ENCODE measurements at regions of chr19 and their contacts with region 1.

Region 1: GRCh38 chr19:52734893-52735661 is at the start of gene ZNF611:
- DNase-seq: peak; percentile 99
- H3K4me3 Mint-ChIP-seq: peak within 1 kb of the TSS; percentile 76
- H3K27ac Mint-ChIP-seq: peak within 1 kb of the TSS; percentile 89
- H3K4me1 Mint-ChIP-seq: peaks cover 26% of the 10 kb centered on the region
- H3K27me3 Mint-ChIP-seq: no peaks in the 10 kb centered on the region
- total RNA-seq, gene ZNF611: 17.9 to 20.3 TPM

Region 2: GRCh38 chr19:52535771-52536447 is 199.2 kb before region 1 on chr19:
- CTCF ChIA-PET with region 1: no interaction called
- POLR2A ChIA-PET with region 1: no interaction called
- intact Hi-C with region 1: loop called (anchors 2 kb)
- DNase-seq: peak; percentile 96
- H3K4me3 Mint-ChIP-seq: peak overlapping the region; percentile 80
- H3K27ac Mint-ChIP-seq: peak overlapping the region; percentile 91
- H3K4me1 Mint-ChIP-seq: peaks cover 22% of the 10 kb centered on the region
- H3K27me3 Mint-ChIP-seq: no peaks in the 10 kb centered on the region

Region 3: DNA sequence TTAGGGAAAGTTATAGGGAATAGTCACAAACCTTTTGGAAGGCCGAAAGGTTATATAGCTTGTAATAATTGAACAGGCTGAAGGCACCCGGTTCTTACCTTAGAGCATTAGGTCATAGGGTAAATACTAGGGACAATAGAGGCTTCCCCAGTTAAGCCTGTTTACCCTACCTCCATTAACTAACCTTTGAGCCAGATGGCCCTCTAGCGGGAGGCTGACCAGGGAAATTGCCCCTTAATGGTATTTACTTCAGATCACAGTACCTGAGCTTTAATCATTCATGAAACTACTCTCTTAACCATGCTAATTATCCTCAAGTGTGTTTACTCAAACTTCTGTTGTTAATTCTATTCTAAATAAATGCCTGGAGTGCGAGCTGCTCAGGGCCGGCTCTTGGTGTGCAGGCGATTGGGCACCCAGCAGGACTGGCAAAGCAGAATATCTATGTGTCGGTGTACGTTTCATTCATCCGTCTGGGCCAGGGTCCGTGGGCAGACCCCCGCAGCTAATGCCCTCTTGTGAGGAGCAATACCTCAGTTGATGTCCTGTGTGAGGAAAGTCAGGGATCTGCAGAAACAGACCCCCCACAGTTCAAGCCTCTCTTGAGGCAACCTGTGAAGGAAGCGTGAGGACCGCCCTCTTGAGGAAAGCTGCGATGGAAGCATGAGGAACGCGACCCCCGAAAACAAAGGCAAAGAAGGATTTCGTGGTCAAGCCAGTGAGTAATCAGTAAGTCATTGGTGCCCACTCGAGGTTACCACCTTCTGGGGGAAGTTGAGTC is 76.3 kb before region 1 on chr19:
- CTCF ChIA-PET with region 1: no interaction called
- POLR2A ChIA-PET with region 1: no interaction called
- intact Hi-C with region 1: no loop called
- DNase-seq: no peak
- H3K4me3 Mint-ChIP-seq: no peak overlapping the region
- H3K27ac Mint-ChIP-seq: no peak overlapping the region
- H3K4me1 Mint-ChIP-seq: peaks cover 10% of the 10 kb centered on the region
- H3K27me3 Mint-ChIP-seq: no peaks in the 10 kb centered on the region

Region 4: GRCh38 chr19:52690369-52691214 is 44.5 kb before region 1 on chr19:
- CTCF ChIA-PET with region 1: no interaction called
- POLR2A ChIA-PET with region 1: no interaction called
- intact Hi-C with region 1: loop called (anchors 1 kb)
- DNase-seq: peak; percentile 95
- H3K4me3 Mint-ChIP-seq: peak overlapping the region; percentile 96
- H3K27ac Mint-ChIP-seq: peak overlapping the region; percentile 88
- H3K4me1 Mint-ChIP-seq: peaks cover 24% of the 10 kb centered on the region
- H3K27me3 Mint-ChIP-seq: no peaks in the 10 kb centered on the region

Region 5: GRCh38 chr19:52786457-52787359 is 51.6 kb after region 1 on chr19 and contains the start of gene ZNF600:
- CTCF ChIA-PET with region 1: no interaction called
- POLR2A ChIA-PET with region 1: no interaction called
- intact Hi-C with region 1: loop called (anchors 2 kb)
- DNase-seq: peak; percentile 92
- H3K4me3 Mint-ChIP-seq: peak within 1 kb of the TSS; percentile 85
- H3K27ac Mint-ChIP-seq: peak within 1 kb of the TSS; percentile 69
- H3K4me1 Mint-ChIP-seq: peaks cover 27% of the 10 kb centered on the region
- H3K27me3 Mint-ChIP-seq: no peaks in the 10 kb centered on the region
- total RNA-seq, gene ZNF600: 11.1 to 13.4 TPM

Measured in activated CD4-positive, alpha-beta memory T cell treated with anti-CD3 and anti-CD28 coated beads for 36 hours (primary cell).